ENCODE measurements at regions of chr9 and their contacts with region 1.

Region 1: DNA sequence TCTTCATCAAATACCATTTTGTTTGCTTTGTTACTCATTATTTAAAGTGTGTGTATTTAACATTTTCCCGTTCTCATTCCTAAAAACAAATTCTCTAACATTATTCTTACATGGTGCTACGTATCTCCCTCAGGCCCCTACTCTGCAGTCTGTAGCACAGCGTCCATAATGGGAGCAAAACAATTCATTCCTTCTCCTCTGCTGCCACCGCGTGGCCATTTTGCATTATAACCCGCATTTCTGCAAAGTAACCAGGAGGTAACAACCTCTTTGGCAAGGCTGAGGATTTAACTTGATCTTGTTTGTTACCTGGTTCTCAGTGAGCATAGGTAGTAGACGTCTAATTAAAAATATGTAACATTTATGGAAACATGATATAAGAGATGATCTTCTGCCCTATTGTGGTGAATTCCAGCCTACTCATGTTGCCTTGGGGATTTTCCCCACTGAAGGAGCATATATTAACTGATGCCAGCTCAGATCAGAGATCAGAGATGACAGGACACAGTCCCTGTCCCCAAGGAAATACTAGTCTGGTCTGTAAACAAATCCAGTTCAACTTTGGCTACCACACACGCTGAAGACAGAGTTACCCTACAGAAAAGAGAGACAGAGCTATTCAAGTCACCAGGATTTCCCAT is 10.5 kb downstream of the OR1K1 start:
- DNase-seq: peak; percentile 59 to 76 (median 61)
- ATAC-seq: peak; percentile 81 to 93 (median 89)
- H3K4me3 ChIP-seq: no peak overlapping the region
- H3K27ac ChIP-seq: no peak overlapping the region
- H3K4me1 ChIP-seq: peaks cover 0 to 4% (median 0%) of the 10 kb centered on the region in 12 donors
- H3K27me3 ChIP-seq: no peaks in the 10 kb centered on the region
- CTCF ChIP-seq: peak; percentile 65 to 86 (median 76)
- POLR2A ChIP-seq: no peak

Region 2: GRCh38 chr9:122099271-122099869 is 711.1 kb before region 1 on chr9:
- intact Hi-C with region 1: loop called in 6 of 10 experiments (anchors 5 to 10 kb)
- DNase-seq: peak; percentile 75 to 89 (median 79)
- ATAC-seq: peak in 3 of 4 donors; percentile 78 to 89 (median 88)
- H3K4me3 ChIP-seq: peak overlapping the region in 1 of 12 donors; percentile 27
- H3K27ac ChIP-seq: no peak overlapping the region
- H3K4me1 ChIP-seq: peaks cover 0 to 8% (median 0%) of the 10 kb centered on the region in 12 donors
- H3K27me3 ChIP-seq: no peaks in the 10 kb centered on the region
- CTCF ChIP-seq: peak; percentile 79 to 94 (median 88)
- POLR2A ChIP-seq: no peak

Region 3: GRCh38 chr9:122370869-122371755 is 439.3 kb before region 1 on chr9 and contains the start of gene PTGS1:
- intact Hi-C with region 1: loop called in 2 of 10 experiments (anchors 10 kb)
- DNase-seq: peak; percentile 54 to 77 (median 61)
- ATAC-seq: peak in 3 of 4 donors; percentile 65 to 70 (median 65)
- H3K4me3 ChIP-seq: peak within 1 kb of the TSS in 11 of 12 donors; percentile 27 to 69 (median 48)
- H3K27ac ChIP-seq: peak within 1 kb of the TSS in 4 of 12 donors; percentile 17 to 87 (median 60)
- H3K4me1 ChIP-seq: peaks cover 0 to 41% (median 17%) of the 10 kb centered on the region in 12 donors
- H3K27me3 ChIP-seq: peaks cover 0 to 9% (median 0%) of the 10 kb centered on the region in 9 donors
- CTCF ChIP-seq: no peak
- POLR2A ChIP-seq: no peak
- total RNA-seq, gene PTGS1: 2.0 to 24.7 (median 6.3) TPM

Region 4: DNA sequence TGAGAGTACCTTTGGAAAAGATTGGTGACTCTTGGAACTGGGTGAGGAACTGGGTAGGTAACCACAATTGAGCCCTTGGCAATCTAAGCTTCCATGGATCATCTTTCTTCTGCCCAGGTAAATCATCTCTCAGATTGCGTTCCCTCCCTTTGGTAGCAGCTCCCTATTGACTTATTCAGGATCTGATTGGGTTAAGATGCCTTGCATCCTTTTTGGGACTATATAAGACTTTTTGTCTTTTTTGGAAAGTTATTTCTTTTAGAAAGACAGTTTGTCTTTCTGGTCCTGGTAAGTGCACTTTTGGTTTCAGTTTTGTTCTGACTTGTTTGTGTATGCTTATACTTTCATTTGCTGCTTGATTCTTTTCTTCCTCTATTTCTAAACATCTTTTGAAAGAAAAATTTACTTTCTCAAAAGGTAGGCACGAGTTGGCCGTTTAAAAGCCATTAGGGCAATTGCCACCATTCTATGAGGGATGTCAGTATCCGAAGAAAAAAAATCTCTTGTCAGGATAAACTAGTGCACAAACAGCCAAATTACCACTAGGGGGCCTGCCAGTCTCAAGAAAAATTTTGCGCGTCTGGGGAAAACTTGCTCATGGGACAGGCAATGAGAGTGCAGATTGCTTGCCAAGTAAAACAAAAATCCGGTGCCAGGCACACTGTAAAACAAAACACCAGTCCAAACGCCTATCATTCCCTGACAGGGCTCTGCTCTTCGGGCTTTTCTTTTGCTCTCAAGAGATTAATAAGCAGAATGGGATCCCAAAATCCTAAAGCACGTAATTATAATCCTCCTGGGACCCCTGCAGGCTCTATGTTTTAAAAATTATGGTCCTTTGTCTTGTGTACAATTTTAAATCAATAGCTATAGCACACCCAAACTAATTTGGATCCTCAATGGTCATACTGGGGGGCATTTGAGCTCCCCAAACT is 345.5 kb before region 1 on chr9:
- intact Hi-C with region 1: loop called (anchors 1 to 5 kb)
- DNase-seq: peak in 4 of 5 donors; percentile 66 to 72 (median 67)
- ATAC-seq: peak; percentile 69 to 85 (median 81)
- H3K4me3 ChIP-seq: peak overlapping the region in 10 of 12 donors; percentile 23 to 60 (median 48)
- H3K27ac ChIP-seq: peak overlapping the region in 3 of 12 donors; percentile 14 to 78 (median 39)
- H3K4me1 ChIP-seq: peaks cover 0 to 14% (median 5%) of the 10 kb centered on the region in 12 donors
- H3K27me3 ChIP-seq: peaks cover 0 to 16% (median 0%) of the 10 kb centered on the region in 9 donors
- CTCF ChIP-seq: peak; percentile 71 to 88 (median 82)
- POLR2A ChIP-seq: no peak

Region 5: DNA sequence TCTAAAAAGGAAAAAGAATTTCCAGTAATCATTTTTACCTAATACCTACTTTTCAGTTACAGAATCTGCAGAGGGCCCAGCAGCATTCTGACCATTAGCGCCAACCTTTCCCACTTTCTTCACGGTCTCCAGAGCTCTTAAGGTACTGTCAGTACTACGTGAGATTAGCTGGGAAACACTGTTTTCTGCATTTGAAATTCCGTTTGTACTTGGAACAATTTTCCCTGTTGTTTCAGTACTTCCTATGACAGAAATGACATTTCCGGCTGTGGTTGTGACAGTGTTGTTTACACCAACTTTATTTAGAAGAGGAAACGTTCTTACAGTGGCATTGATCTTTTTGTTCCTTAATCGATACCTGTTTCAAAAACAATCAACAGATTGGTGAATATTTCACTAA is 54.9 kb after region 1 on chr9:
- intact Hi-C with region 1: no loop called
- DNase-seq: no peak
- ATAC-seq: peak in 1 of 4 donors; percentile 55
- H3K4me3 ChIP-seq: peak overlapping the region in 1 of 12 donors; percentile 8
- H3K27ac ChIP-seq: peak overlapping the region in 10 of 12 donors; percentile 3 to 71 (median 34)
- H3K4me1 ChIP-seq: peaks cover 0 to 5% (median 0%) of the 10 kb centered on the region in 12 donors
- H3K27me3 ChIP-seq: no peaks in the 10 kb centered on the region
- CTCF ChIP-seq: no peak
- POLR2A ChIP-seq: no peak